ENCODE measurements at regions of chr3 and their contacts with region 1.

Region 1: DNA sequence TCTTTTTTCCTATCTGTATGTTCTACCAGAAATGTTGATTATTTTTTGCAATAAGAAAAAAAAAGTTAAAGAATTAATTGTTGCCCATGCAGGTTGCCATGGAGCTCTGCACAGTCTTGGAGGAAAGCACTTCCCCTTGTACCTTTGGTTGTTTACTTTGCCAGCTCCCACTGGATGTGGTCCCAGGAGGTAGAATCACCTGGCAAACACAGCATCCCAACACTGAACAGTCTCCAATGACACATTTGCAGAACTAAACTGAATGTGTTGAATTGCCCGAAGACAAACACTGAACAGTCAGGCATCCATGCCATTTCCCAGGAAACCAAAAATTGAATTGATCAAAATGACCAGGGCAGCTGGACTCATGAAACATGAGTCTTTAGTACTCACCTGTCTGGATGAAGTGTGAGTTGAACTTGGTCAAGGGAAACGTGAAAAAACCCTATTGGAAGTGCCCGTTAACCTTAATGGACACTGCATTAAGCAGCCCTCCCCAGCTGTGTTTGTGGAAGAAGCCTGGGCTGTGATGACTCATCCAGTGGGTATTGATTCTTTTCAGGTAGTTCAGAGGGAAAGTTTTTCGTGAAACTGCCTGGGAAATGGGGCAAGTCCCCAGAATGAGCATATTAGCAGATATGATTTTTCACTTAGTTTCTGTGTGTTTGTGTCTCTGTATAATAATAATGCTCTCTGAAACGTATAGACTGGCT is 284.7 kb upstream of the STT3B start:
- DNase-seq: peak; percentile 58
- H3K4me3 Mint-ChIP-seq: no peak overlapping the region
- H3K27ac Mint-ChIP-seq: peak overlapping the region; percentile 67
- H3K4me1 Mint-ChIP-seq: peaks cover 50% of the 10 kb centered on the region
- H3K27me3 Mint-ChIP-seq: no peaks in the 10 kb centered on the region

Region 2: DNA sequence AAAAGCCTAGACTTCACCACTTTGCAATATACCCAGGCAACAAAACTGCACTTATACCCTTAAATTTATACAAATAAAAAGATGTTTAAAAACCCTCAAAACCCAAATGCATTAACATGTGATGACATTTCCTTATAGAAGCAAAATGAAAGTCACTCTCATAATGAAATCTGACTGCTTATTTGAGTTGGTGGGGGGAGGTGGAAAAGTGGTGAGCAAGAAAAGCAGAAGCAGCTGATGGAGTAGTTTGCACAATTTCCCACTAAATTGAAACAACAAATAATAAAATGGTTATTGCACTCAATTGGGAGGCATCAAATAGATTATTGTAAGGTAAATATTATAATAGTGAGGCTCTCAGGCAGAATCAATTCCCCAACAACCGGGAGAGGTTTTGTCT is 299.6 kb before region 1 on chr3:
- CTCF ChIA-PET with region 1: no interaction called
- POLR2A ChIA-PET with region 1: no interaction called
- intact Hi-C with region 1: no loop called
- DNase-seq: no peak
- H3K4me3 Mint-ChIP-seq: no peak overlapping the region
- H3K27ac Mint-ChIP-seq: no peak overlapping the region
- H3K4me1 Mint-ChIP-seq: no peaks in the 10 kb centered on the region
- H3K27me3 Mint-ChIP-seq: no peaks in the 10 kb centered on the region

Region 3: DNA sequence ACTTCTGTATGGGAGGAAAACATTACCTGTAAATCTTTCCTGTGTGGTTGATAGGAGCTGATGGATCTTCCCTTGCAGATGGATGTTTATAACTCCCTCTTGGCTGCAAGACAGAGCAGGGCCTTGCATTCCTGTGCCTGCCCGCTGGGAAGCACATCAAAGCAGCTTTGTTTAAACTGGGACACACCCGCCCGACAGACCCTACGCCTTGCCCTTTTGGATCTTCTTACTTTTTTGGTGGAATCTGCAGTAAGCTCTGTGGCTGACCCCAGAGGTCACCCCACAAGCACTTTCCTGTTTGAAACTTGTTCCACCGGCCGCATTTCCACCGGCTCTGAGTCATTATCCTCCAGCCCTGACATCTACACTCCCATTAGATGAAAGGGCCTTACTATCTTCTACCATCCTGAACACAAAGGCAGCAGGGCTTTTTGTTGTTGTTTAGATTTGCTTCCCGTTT is 40.7 kb after region 1 on chr3:
- CTCF ChIA-PET with region 1: no interaction called
- POLR2A ChIA-PET with region 1: no interaction called
- intact Hi-C with region 1: loop called (anchors 5 kb)
- DNase-seq: peak; percentile 74
- H3K4me3 Mint-ChIP-seq: no peak overlapping the region
- H3K27ac Mint-ChIP-seq: peak overlapping the region; percentile 7
- H3K4me1 Mint-ChIP-seq: peaks cover 24% of the 10 kb centered on the region
- H3K27me3 Mint-ChIP-seq: no peaks in the 10 kb centered on the region

Region 4: DNA sequence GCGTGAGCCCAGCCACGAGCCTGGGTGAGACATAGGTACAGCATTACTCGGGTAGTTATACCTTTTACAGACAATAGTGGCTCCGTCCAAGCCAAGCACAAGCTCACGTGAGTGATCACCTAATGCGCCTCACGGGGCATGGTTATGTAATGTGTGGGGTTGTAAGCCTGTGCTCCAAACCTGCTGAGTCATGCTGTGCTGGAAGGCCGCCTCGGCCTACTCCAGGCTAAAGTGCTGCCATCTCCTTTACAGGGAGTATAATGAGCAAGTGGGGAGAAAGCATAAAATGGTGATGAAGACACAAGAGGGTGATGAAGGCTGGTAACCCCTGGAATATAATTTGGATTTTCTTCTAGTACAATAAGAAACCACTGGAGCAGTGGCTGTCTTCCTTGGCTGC is 108.9 kb after region 1 on chr3:
- CTCF ChIA-PET with region 1: no interaction called
- POLR2A ChIA-PET with region 1: interaction called, 10 read pairs
- intact Hi-C with region 1: loop called (anchors 1 kb)
- DNase-seq: peak; percentile 31
- H3K4me3 Mint-ChIP-seq: no peak overlapping the region
- H3K27ac Mint-ChIP-seq: peak overlapping the region; percentile 66
- H3K4me1 Mint-ChIP-seq: peaks cover 38% of the 10 kb centered on the region
- H3K27me3 Mint-ChIP-seq: no peaks in the 10 kb centered on the region

Measured in activated CD4-positive, alpha-beta memory T cell treated with anti-CD3 and anti-CD28 coated beads for 36 hours (primary cell).